AG04449 (cell line): ENCODE measurements at regions of chr14 and their contacts with region 1.

Region 1: GRCh38 chr14:67583711-67584644 is 16.1 kb downstream of the PIGH start:
- DNase-seq: no peak
- H3K4me3 ChIP-seq: no peak overlapping the region
- CTCF ChIP-seq: peak; percentile 72

Region 2: DNA sequence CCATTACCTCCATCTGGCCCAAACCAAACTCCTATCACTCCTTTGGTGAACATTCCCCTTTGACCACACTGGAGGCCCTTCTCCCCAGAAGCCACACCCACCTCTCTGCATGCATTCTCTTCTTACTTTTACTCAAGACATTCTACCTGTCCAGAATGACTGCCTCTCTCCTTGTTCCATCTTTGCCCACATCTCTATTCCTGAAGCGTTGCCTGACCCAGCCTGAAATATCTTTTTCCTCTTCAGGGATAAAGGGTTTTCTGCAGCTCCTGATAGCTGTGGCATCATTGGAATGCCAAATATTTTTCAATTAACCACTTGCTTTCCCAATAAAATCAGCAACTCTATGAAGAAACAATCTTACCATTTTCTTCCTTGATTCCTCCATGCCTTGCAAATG is 187.5 kb before region 1 on chr14:
- CTCF ChIA-PET with region 1: no interaction called
- POLR2A ChIA-PET with region 1: no interaction called
- DNase-seq: no peak
- H3K4me3 ChIP-seq: no peak overlapping the region
- CTCF ChIP-seq: no peak

Region 3: GRCh38 chr14:67526676-67527459 is 57.1 kb before region 1 on chr14:
- CTCF ChIA-PET with region 1: interaction called, 16 read pairs
- POLR2A ChIA-PET with region 1: no interaction called
- DNase-seq: no peak
- H3K4me3 ChIP-seq: no peak overlapping the region
- CTCF ChIP-seq: peak; percentile 45

Region 4: DNA sequence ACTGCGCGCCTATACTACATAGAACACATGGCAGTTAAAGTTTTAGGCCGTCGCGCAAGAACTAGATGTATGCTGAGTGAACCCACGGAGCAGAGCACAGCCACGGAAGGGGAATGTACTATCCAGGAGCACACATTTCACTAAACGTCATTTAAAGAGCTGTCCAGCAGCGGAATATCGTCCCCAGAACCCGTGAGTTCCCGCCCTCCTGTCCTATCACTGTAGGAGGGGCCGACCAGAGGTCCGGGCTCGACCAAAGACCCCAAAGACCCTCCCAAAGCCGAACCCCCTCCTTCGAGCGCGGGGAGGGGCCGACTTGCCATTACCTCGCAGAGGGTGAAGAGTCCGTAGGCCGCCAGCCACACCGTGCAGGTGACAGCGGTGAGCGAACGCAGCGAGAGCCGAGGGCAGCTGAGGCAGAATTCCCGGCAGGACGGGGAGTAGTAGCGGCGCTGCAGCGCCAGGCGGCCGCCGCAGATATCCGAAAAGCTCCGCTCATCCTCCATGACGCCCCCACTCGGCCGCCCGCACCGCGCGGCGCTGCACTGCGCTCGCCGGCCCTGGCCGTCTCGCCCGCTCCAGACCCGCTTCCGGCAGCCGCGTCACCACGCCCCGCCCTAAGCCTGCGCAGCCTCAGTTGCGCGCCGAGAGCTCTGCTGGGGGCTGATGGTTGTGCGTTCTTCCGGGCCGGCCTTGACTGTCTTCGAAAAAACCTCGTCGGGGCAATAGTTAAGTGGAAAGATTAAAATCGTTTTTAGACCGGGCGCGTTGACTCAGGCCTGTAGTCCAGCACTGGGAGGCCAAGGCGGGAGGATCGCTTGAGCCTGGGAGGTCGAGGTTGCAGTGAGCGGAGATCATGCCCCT is 16.0 kb after region 1 on chr14 and contains the start of gene PIGH:
- CTCF ChIA-PET with region 1: interaction called, 41 read pairs
- POLR2A ChIA-PET with region 1: interaction called, 3 read pairs
- DNase-seq: no peak
- H3K4me3 ChIP-seq: peak within 1 kb of the TSS; percentile 86
- CTCF ChIP-seq: peak; percentile 69

Region 5: GRCh38 chr14:67674481-67675169 is 90.6 kb after region 1 on chr14 and contains the start of gene VTI1B:
- CTCF ChIA-PET with region 1: interaction called, 269 read pairs
- POLR2A ChIA-PET with region 1: no interaction called
- DNase-seq: no peak
- H3K4me3 ChIP-seq: peak within 1 kb of the TSS; percentile 78
- CTCF ChIP-seq: no peak

Region 6: GRCh38 chr14:67695394-67695949 is 111.5 kb after region 1 on chr14 and contains the start of gene RDH11:
- CTCF ChIA-PET with region 1: interaction called, 417 read pairs
- POLR2A ChIA-PET with region 1: no interaction called
- DNase-seq: no peak
- H3K4me3 ChIP-seq: peak within 1 kb of the TSS; percentile 94
- CTCF ChIP-seq: no peak

Region 7: DNA sequence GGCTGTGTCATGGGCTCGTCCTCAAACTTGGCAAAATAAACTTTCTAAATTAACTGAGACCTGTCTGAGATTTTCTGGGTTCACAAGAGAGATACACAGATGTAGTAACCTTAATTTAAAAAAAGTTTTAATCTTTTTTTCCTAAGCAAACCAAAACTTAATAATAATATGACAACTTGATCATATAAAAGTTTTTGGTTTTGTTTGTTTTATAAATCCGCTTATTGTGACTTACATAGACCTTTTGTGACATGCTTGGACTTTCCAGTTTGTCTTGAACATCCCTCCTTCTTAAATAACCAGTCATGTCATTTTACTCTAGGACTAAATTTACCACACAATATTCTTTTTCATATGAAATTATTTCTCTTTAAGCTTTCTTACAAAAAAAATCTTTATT is 126.2 kb after region 1 on chr14:
- CTCF ChIA-PET with region 1: interaction called, 417 read pairs
- POLR2A ChIA-PET with region 1: interaction called, 6 read pairs
- DNase-seq: no peak
- H3K4me3 ChIP-seq: no peak overlapping the region
- CTCF ChIP-seq: no peak